Right ventricle myocardium inferior (tissue), 1 donor: ENCODE measurements at regions of chr20 and their contacts with region 1.

Region 1: GRCh38 chr20:19699180-19699971 is 58.7 kb upstream of the RIN2 start:
- DNase-seq: no peak
- ATAC-seq: no peak

Region 2: GRCh38 chr20:19661717-19662636 is 37.4 kb before region 1 on chr20:
- intact Hi-C with region 1: no loop called
- DNase-seq: no peak
- ATAC-seq: peak; percentile 70

Region 3: GRCh38 chr20:19735446-19735845 is 36.1 kb after region 1 on chr20:
- intact Hi-C with region 1: loop called (anchors 5 kb)
- DNase-seq: peak; percentile 75
- ATAC-seq: peak; percentile 96

Region 4: GRCh38 chr20:19885939-19886660 is 186.7 kb after region 1 on chr20:
- intact Hi-C with region 1: no loop called
- DNase-seq: peak; percentile 79
- ATAC-seq: peak; percentile 68

Region 5: DNA sequence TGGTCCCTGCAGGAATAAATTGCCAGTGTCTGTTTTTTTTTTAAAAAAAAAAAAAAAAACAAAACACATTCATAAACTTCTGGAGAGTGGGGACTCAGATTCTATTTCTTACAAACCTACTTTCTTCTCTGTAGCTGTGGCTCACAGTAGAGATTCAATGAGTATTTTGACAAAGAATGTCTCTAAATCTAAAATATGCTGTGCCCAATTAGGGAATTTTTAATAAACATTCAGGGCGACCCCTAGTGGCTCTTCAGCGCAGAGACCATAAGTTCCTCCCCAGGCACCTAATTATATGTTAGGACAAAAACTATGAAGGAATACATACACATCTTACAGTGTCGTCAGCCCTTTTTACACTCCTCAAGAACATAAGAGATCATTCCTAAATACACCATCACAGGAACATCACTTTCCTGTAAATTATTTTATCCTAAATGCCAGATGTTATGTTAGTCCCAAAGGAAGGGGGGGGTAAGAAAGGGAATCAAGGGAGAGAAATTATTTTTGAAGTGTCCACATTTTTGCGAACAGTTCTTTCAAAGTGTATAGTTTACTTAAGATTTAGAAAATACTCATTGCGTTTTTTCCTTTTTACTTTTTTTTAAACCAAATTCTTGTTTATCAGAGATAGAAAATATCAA is 296.0 kb after region 1 on chr20:
- intact Hi-C with region 1: no loop called
- DNase-seq: no peak
- ATAC-seq: no peak